Vagina (tissue), 2 donors: ENCODE measurements at regions of chr2 and their contacts with region 1.

Region 1: GRCh38 chr2:70454936-70455875 is 98.4 kb downstream of the TGFA start:
- DNase-seq: peak in 1 of 2 donors; percentile 65
- H3K4me3 ChIP-seq: no peak overlapping the region
- H3K27ac ChIP-seq: no peak overlapping the region
- H3K4me1 ChIP-seq: no peaks in the 10 kb centered on the region
- H3K27me3 ChIP-seq: no peaks in the 10 kb centered on the region
- CTCF ChIP-seq: no peak
- POLR2A ChIP-seq: no peak

Region 2: GRCh38 chr2:70123051-70123828 is 332.0 kb before region 1 on chr2:
- intact Hi-C with region 1: no loop called
- DNase-seq: no peak
- H3K4me3 ChIP-seq: peak overlapping the region; percentile 65 to 68
- H3K27ac ChIP-seq: peak overlapping the region; percentile 100
- H3K4me1 ChIP-seq: peaks cover 43% of the 10 kb centered on the region
- H3K27me3 ChIP-seq: no peaks in the 10 kb centered on the region
- CTCF ChIP-seq: no peak
- POLR2A ChIP-seq: no peak

Region 3: DNA sequence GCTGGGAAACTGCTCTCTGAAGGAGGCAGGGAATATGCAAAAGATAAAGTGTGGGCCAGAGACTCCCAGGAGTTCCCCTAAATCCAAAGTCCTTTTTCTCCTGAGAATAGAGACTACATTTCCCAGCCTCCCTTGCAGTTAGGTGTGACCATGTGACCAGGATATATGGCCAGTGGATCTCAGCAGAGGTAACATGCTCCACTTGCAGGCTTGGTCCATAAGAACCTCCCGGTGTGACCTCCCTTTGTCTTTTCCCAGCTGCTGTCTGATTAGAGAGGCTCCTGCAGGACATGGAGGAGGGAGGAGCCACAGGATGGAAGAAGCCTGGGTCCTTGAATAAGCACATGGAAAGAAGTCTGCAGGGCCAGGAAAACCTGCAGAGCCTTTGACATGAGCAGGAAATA is 22.2 kb after region 1 on chr2:
- intact Hi-C with region 1: loop called (anchors 1 kb)
- DNase-seq: peak in 1 of 2 donors; percentile 25
- H3K4me3 ChIP-seq: no peak overlapping the region
- H3K27ac ChIP-seq: no peak overlapping the region
- H3K4me1 ChIP-seq: no peaks in the 10 kb centered on the region
- H3K27me3 ChIP-seq: no peaks in the 10 kb centered on the region
- CTCF ChIP-seq: no peak
- POLR2A ChIP-seq: no peak